Activated CD4-positive, alpha-beta memory T cell treated with anti-CD3 and anti-CD28 coated beads for 36 hours (primary cell): ENCODE measurements at regions of chr2 and their contacts with region 1.

Region 1: GRCh38 chr2:68715353-68716041 is 19.1 kb upstream of the ARHGAP25 start:
- DNase-seq: peak; percentile 77
- H3K4me3 Mint-ChIP-seq: peak overlapping the region; percentile 8
- H3K27ac Mint-ChIP-seq: peak overlapping the region; percentile 80
- H3K4me1 Mint-ChIP-seq: peaks cover 81% of the 10 kb centered on the region
- H3K27me3 Mint-ChIP-seq: no peaks in the 10 kb centered on the region

Region 2: DNA sequence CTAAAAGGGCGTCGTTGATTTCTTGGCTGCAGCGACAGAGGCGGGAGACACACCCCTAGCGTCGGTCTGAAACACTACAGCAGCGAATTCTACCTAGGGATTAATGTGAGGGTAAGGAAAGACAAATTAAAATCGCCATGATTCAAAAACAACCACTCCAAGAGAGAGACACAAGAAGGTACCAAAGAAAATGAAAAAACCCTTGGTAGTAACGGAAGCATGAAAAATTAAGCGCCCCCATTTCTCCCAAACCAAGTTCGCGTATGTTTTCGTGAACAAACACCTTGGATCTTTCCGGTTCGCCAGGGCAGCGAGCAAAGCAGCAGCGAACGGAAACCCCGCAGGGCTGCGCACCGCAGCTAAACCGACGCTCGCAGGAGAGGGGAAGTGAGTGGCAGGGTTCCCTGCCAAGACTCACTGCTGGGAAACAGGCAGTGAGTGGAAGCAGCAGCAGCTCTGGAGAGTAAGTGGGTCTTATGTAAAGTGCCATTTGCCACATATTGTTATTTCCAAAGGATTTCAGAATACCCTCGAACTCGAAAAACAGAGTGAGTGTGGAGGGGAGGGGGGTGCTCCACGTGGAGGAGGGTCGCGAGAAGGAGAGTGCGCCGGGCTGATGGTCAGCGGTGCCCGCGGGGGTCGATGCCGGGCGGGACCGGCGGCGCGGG is 464.2 kb before region 1 on chr2:
- CTCF ChIA-PET with region 1: no interaction called
- POLR2A ChIA-PET with region 1: no interaction called
- intact Hi-C with region 1: loop called (anchors 10 kb)
- DNase-seq: peak; percentile 86
- H3K4me3 Mint-ChIP-seq: peak overlapping the region; percentile 86
- H3K27ac Mint-ChIP-seq: peak overlapping the region; percentile 97
- H3K4me1 Mint-ChIP-seq: peaks cover 35% of the 10 kb centered on the region
- H3K27me3 Mint-ChIP-seq: no peaks in the 10 kb centered on the region

Region 3: GRCh38 chr2:68516051-68516955 is 199.2 kb before region 1 on chr2:
- CTCF ChIA-PET with region 1: no interaction called
- POLR2A ChIA-PET with region 1: no interaction called
- intact Hi-C with region 1: loop called (anchors 5 kb)
- DNase-seq: no peak
- H3K4me3 Mint-ChIP-seq: no peak overlapping the region
- H3K27ac Mint-ChIP-seq: no peak overlapping the region
- H3K4me1 Mint-ChIP-seq: peaks cover 8% of the 10 kb centered on the region
- H3K27me3 Mint-ChIP-seq: no peaks in the 10 kb centered on the region

Region 4: GRCh38 chr2:68726608-68727367 is 11.3 kb after region 1 on chr2:
- CTCF ChIA-PET with region 1: interaction called, 10 read pairs
- POLR2A ChIA-PET with region 1: interaction called, 4 read pairs
- intact Hi-C with region 1: loop called (anchors 1 kb)
- DNase-seq: peak; percentile 93
- H3K4me3 Mint-ChIP-seq: peak overlapping the region; percentile 28
- H3K27ac Mint-ChIP-seq: peak overlapping the region; percentile 88
- H3K4me1 Mint-ChIP-seq: peaks cover 77% of the 10 kb centered on the region
- H3K27me3 Mint-ChIP-seq: no peaks in the 10 kb centered on the region

Region 5: DNA sequence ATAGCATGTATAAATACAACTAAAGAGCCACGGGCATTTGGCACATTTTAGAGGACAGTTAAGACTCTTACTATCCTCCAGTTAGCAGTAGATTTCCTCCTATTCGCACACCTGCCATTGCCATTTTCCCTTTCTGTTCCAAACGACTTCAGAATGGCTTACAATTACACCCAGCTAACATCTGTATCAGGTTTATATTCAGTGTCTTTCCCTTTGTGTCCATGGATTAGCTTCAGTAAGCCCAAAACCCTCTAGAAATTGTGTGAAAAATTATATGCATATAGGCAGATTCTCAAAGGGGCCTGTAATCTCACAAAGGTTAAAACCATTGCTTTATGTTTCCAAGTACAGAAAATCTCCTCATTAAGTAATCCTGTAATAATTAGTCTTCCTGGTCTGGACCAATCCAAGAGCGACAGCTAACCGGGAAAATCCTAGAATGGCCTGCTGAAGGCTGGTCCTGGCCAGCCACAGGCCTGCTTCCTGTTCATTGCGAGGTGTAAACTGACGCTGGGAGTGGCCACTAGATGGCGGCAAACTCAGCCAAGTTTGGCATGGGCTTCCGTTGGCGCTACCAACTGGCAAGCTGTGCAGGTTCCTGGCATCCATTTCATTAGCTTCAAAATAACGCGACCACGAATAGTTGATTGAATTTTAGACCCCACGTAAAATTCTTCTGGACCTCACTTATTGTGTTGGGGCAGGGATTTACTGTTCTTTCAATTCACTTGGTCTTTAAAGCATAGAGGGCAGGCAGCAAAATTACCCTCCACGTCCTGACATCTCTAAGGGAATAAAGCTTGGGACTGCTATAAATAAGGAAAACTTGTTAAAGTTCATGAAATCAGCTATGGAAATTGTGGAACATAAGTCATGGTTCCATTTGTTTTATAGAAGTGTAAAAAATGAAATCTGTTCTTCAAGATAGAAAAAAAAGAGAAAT is 36.2 kb after region 1 on chr2:
- CTCF ChIA-PET with region 1: interaction called, 57 read pairs
- POLR2A ChIA-PET with region 1: interaction called, 15 read pairs
- intact Hi-C with region 1: no loop called
- DNase-seq: peak; percentile 95
- H3K4me3 Mint-ChIP-seq: peak overlapping the region; percentile 30
- H3K27ac Mint-ChIP-seq: peak overlapping the region; percentile 79
- H3K4me1 Mint-ChIP-seq: peaks cover 85% of the 10 kb centered on the region
- H3K27me3 Mint-ChIP-seq: no peaks in the 10 kb centered on the region

Region 6: DNA sequence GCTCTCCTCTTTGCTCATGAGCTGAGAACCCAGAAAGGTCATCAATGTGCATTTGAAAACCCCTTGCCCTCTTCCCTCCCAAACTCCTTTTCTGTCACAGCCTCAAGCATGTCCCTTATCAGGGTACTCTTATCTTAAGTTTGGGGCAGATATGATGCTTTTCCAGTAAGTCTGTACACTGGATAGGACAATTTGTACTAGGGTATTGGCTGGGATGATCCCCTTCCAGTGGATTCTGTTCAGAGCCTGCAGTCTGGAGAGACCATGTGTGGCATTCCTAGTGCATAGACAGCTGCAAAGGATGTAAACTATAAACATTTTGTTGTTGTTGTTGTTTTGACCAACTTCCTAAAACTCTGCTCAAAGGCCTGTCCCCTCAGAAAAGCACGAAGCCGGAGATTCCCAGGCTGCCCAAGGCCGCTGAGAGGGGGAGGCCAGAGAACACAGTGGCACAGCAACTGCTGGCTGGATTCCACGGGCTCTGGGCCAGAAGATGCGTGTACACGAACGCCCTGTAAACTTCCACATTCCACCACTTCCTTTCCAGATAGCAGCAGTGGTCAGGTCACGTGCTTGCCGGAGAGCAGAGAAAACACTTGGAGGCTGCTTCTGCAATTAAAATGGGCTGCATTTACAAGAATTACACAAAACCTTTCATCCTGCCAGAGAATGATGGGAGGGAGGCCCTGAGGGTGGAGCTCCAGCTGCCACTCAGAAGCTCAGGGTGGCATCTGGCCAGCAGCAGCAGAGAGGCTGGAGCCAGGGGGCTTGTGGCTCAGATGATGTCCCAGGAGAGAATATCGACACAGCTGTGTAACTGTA is 113.6 kb after region 1 on chr2:
- CTCF ChIA-PET with region 1: no interaction called
- POLR2A ChIA-PET with region 1: no interaction called
- intact Hi-C with region 1: loop called (anchors 1 kb)
- DNase-seq: peak; percentile 86
- H3K4me3 Mint-ChIP-seq: peak overlapping the region; percentile 21
- H3K27ac Mint-ChIP-seq: peak overlapping the region; percentile 79
- H3K4me1 Mint-ChIP-seq: peaks cover 64% of the 10 kb centered on the region
- H3K27me3 Mint-ChIP-seq: no peaks in the 10 kb centered on the region

Region 7: DNA sequence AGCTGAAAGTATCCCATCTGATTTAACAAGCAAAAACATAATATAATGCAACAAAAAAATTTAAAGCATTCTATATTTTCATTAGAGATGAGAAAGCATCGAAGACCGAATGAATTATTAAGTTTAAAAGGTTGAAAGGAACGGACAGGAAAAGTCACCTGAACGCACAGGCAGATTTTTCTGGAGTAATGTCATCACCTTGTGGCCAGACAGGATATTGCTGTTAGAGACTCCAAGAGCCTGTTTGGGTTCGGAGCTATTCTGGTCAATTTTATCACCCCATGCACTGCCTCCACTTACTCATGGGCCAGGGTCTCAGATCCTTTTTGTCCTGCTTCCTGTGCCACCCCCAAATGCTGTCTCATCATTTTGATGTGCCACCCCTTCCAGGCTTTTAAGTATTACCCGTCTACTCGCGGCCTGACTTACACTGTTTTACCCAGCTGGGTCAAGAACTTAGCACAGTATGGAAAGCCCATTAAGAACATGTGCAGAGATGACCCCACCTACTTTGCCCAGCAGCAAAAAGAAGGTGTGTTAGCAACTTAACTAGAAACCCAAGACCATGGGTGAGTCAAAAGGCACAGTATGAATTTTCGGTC is 209.9 kb after region 1 on chr2:
- CTCF ChIA-PET with region 1: interaction called, 118 read pairs
- POLR2A ChIA-PET with region 1: no interaction called
- intact Hi-C with region 1: no loop called
- DNase-seq: peak; percentile 57
- H3K4me3 Mint-ChIP-seq: no peak overlapping the region
- H3K27ac Mint-ChIP-seq: no peak overlapping the region
- H3K4me1 Mint-ChIP-seq: peaks cover 6% of the 10 kb centered on the region
- H3K27me3 Mint-ChIP-seq: no peaks in the 10 kb centered on the region